OCI-LY7 (cell line): ENCODE measurements at regions of chr15 and their contacts with region 1.

Region 1: GRCh38 chr15:40807028-40807887 is at the starts of genes DNAJC17 and ZFYVE19:
- DNase-seq: peak; percentile 99
- H3K4me3 ChIP-seq: peak within 1 kb of the TSS; percentile 78
- H3K27ac ChIP-seq: peak within 1 kb of the TSS; percentile 76
- H3K4me1 ChIP-seq: peaks cover 19% of the 10 kb centered on the region
- CTCF ChIP-seq: no peak
- total RNA-seq, gene DNAJC17: 24.2 and 39.2 TPM in 2 replicates
- total RNA-seq, gene ZFYVE19: 24.3 and 29.3 TPM in 2 replicates

Region 2: GRCh38 chr15:40754883-40755811 is 52.1 kb before region 1 on chr15 and contains the start of gene RMDN3:
- CTCF ChIA-PET with region 1: no interaction called
- POLR2A ChIA-PET with region 1: no interaction called
- intact Hi-C with region 1: loop called (anchors 2 kb)
- DNase-seq: peak; percentile 97
- H3K4me3 ChIP-seq: peak within 1 kb of the TSS; percentile 85
- H3K27ac ChIP-seq: peak within 1 kb of the TSS; percentile 90
- H3K4me1 ChIP-seq: peaks cover 52% of the 10 kb centered on the region
- CTCF ChIP-seq: no peak
- total RNA-seq, gene RMDN3: 10.7 and 14.9 TPM in 2 replicates